GM10248 (cell line): ENCODE measurements at regions of chr1 and their contacts with region 1.

Region 1: DNA sequence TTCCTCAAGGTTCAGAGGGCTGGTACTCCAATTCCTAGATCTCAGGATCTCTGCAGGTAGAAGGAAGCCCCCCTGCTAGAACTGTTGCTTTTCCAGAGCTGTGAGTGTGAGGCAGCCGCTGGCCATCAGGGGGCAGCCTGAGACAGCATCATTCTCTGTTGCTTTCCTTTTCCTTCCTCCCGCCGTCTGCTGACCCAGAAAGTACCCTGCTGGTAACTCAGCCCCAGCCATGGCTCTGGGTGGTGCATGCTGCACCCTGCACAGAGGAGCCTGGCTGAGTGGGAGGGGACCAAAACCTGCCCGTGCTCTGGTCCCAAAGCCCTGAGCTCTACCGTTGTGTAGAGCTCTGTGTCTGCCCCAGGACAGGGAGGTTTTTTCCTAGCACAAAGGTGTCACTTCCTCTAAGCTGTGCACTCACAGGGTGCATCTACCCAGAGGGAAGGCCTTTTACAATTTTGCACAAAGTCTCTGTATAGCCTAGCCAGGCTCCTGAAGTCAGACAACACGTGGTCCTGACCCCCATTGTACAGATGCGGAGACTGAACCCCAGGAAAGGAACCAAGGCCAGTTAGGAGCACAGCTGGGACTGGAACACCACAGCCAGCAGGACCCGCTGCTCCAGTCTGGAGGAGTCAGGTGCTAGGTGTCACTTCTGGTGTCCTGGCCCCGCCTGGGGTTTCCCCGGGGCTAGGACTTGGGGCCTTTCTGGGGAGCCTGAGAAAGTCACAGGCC is 5.6 kb upstream of the FAM131C start:
- DNase-seq: peak; percentile 84
- CTCF ChIP-seq: peak; percentile 89

Region 2: DNA sequence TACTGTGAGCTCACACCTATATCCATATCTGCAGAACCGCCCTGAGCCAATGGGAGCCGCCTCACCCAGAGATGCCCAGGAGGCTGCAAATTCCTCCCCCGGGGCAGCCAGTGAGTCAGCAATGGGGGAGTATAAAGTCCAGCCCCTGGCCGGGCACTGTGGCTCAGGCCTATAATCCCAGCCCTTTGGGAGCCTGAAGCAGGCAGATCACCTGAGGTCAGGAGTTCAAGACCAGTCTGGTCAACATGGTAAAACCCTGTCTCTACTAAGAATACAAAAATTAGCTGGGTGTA is 40.5 kb before region 1 on chr1:
- CTCF ChIA-PET with region 1: no interaction called
- POLR2A ChIA-PET with region 1: no interaction called
- DNase-seq: no peak
- CTCF ChIP-seq: no peak

Region 3: GRCh38 chr1:16095447-16095846 is 16.4 kb after region 1 on chr1:
- CTCF ChIA-PET with region 1: interaction called, 20 read pairs
- POLR2A ChIA-PET with region 1: no interaction called
- DNase-seq: no peak
- CTCF ChIP-seq: no peak

Region 4: GRCh38 chr1:16187748-16188401 is 108.8 kb after region 1 on chr1:
- CTCF ChIA-PET with region 1: interaction called, 328 read pairs
- POLR2A ChIA-PET with region 1: no interaction called
- DNase-seq: peak; percentile 86
- CTCF ChIP-seq: peak; percentile 99

Region 5: DNA sequence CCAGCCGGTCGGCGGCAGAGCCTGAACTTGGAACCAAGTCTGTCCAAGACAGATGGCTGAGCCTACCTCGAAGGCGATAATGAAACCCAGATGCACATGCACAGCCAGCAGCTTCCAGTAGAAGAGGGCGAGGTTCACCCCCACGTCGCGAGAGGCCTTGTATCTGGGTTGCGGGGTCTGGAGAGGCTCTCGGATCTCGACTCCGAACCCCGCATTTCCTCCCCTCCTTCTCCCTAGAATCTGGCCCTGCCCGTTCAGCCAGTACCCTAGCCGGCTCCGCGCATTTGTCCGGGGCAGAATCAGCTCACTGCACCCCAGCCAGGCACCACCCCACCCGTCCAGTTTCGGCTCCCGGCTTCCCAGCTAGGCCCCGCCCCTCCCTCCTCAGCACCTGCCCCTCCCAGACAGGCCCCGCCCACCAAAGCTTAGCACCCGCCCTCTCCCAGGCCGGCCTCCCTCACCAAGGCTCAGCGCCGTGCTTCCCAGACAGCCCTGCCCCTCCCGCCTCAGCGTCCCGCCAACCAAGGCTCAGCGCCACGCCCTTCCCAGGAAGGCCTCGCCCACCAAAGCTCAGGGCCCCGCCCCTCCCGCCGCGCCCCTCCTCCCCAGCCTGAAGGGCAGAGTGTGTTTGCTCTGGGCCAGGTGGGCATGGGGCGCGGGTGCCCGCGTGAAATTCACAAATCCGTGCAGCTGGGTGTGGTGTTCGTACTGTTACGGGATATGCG is 138.1 kb after region 1 on chr1:
- CTCF ChIA-PET with region 1: interaction called, 10 read pairs
- POLR2A ChIA-PET with region 1: no interaction called
- DNase-seq: peak; percentile 99
- CTCF ChIP-seq: no peak

Region 6: DNA sequence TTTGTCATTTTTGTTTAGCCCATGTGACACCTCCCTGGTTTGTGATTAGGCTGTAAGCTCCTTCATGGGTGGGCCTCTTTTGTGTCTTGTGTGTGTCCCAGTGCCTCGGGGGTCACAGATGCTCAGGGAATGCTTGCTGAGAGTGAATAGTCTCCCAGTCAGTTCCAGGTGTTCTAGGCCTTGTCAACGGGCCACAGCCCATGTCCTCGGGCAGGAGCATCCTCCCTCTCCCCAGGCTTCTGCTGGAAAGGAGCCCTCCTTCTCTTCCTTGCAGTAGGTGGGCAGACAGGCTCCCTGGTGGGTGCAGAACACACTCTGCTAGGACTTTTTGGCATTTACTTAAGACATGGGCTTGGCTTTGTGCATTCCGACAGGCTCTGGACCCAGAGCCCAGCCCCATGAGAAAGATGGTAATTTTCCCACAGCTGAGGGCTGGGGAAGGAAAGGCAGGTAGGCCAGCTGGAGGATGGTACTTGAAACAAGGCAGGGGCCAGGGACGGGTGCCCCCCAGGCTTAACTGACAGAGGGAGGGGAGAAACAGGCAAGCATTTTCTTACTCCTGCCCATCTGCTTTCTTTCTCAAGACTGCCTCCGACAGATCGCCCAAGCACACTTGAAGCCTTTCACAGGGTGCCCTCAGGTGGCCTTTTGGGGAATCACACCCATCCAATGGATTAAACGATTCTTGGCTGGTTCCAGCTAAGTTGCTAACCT is 165.0 kb after region 1 on chr1:
- CTCF ChIA-PET with region 1: interaction called, 70 read pairs
- POLR2A ChIA-PET with region 1: no interaction called
- DNase-seq: peak; percentile 78
- CTCF ChIP-seq: peak; percentile 79